Activated CD4-positive, alpha-beta T cell treated with anti-CD3 and anti-CD28 coated beads for 36 hours (primary cell): ENCODE measurements at regions of chr7 and their contacts with region 1.

Region 1: GRCh38 chr7:43582503-43583423 is at the start of gene STK17A:
- DNase-seq: peak; percentile 96
- ATAC-seq: peak; percentile 77
- H3K4me3 Mint-ChIP-seq: peak within 1 kb of the TSS; percentile 99
- H3K27ac Mint-ChIP-seq: peak within 1 kb of the TSS; percentile 97
- H3K4me1 Mint-ChIP-seq: peaks cover 29% of the 10 kb centered on the region
- H3K27me3 Mint-ChIP-seq: peaks cover 6% of the 10 kb centered on the region
- total RNA-seq, gene STK17A: 43.2 to 50.9 TPM

Region 2: GRCh38 chr7:43220250-43220649 is 362.5 kb before region 1 on chr7:
- CTCF ChIA-PET with region 1: no interaction called
- POLR2A ChIA-PET with region 1: no interaction called
- intact Hi-C with region 1: no loop called
- DNase-seq: no peak
- ATAC-seq: peak; percentile 23
- H3K4me3 Mint-ChIP-seq: no peak overlapping the region
- H3K27ac Mint-ChIP-seq: no peak overlapping the region
- H3K4me1 Mint-ChIP-seq: no peaks in the 10 kb centered on the region
- H3K27me3 Mint-ChIP-seq: peaks cover 16% of the 10 kb centered on the region

Region 3: DNA sequence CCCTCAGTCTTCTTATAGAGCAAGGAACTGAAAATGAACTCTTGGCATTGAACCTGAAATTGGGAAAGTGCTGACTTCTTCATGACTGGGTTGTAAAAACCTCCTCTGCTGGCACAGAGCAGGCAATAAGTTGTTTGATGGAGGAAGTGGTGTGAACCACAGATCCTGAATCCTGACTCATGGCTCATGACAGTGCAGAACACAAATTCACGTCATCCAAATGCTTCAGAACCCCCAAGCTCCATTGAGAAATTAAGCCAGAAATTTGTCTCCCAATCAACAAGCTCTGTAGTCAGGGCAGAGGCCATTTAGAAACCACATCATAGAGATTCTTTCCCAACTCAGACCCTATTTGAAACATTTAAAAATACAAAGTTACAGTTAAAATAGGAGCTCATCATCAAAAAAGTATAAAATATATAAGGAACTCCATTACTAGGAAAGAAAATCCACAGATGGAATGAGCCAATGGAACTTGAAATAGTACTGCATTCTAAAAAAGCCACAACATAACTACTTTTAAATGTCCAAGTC is 10.2 kb before region 1 on chr7:
- CTCF ChIA-PET with region 1: interaction called, 49 read pairs
- POLR2A ChIA-PET with region 1: interaction called, 6 read pairs
- intact Hi-C with region 1: no loop called
- DNase-seq: peak; percentile 65
- ATAC-seq: peak; percentile 91
- H3K4me3 Mint-ChIP-seq: no peak overlapping the region
- H3K27ac Mint-ChIP-seq: no peak overlapping the region
- H3K4me1 Mint-ChIP-seq: peaks cover 24% of the 10 kb centered on the region
- H3K27me3 Mint-ChIP-seq: peaks cover 2% of the 10 kb centered on the region

Region 4: GRCh38 chr7:43647673-43648472 is 65.1 kb after region 1 on chr7:
- CTCF ChIA-PET with region 1: interaction called, 60 read pairs
- POLR2A ChIA-PET with region 1: interaction called, 66 read pairs
- intact Hi-C with region 1: loop called (anchors 1 kb)
- DNase-seq: peak; percentile 77
- ATAC-seq: peak; percentile 74
- H3K4me3 Mint-ChIP-seq: peak overlapping the region; percentile 66
- H3K27ac Mint-ChIP-seq: peak overlapping the region; percentile 98
- H3K4me1 Mint-ChIP-seq: peaks cover 95% of the 10 kb centered on the region
- H3K27me3 Mint-ChIP-seq: no peaks in the 10 kb centered on the region

Region 5: GRCh38 chr7:43693687-43694398 is 111.1 kb after region 1 on chr7:
- CTCF ChIA-PET with region 1: interaction called, 381 read pairs
- POLR2A ChIA-PET with region 1: interaction called, 9 read pairs
- intact Hi-C with region 1: no loop called
- DNase-seq: no peak
- ATAC-seq: no peak
- H3K4me3 Mint-ChIP-seq: no peak overlapping the region
- H3K27ac Mint-ChIP-seq: no peak overlapping the region
- H3K4me1 Mint-ChIP-seq: peaks cover 33% of the 10 kb centered on the region
- H3K27me3 Mint-ChIP-seq: no peaks in the 10 kb centered on the region

Region 6: GRCh38 chr7:43750016-43750887 is 167.5 kb after region 1 on chr7:
- CTCF ChIA-PET with region 1: interaction called, 14 read pairs
- POLR2A ChIA-PET with region 1: interaction called, 3 read pairs
- intact Hi-C with region 1: no loop called
- DNase-seq: no peak
- ATAC-seq: no peak
- H3K4me3 Mint-ChIP-seq: no peak overlapping the region
- H3K27ac Mint-ChIP-seq: no peak overlapping the region
- H3K4me1 Mint-ChIP-seq: peaks cover 14% of the 10 kb centered on the region
- H3K27me3 Mint-ChIP-seq: peaks cover 8% of the 10 kb centered on the region

Region 7: GRCh38 chr7:43834463-43835251 is 251.9 kb after region 1 on chr7:
- CTCF ChIA-PET with region 1: interaction called, 69 read pairs
- POLR2A ChIA-PET with region 1: interaction called, 7 read pairs
- intact Hi-C with region 1: loop called (anchors 1 kb)
- DNase-seq: peak; percentile 62
- ATAC-seq: peak; percentile 80
- H3K4me3 Mint-ChIP-seq: peak overlapping the region; percentile 66
- H3K27ac Mint-ChIP-seq: peak overlapping the region; percentile 93
- H3K4me1 Mint-ChIP-seq: peaks cover 30% of the 10 kb centered on the region
- H3K27me3 Mint-ChIP-seq: no peaks in the 10 kb centered on the region